A673 (cell line): ENCODE measurements at regions of chr4 and their contacts with region 1.

Region 1: DNA sequence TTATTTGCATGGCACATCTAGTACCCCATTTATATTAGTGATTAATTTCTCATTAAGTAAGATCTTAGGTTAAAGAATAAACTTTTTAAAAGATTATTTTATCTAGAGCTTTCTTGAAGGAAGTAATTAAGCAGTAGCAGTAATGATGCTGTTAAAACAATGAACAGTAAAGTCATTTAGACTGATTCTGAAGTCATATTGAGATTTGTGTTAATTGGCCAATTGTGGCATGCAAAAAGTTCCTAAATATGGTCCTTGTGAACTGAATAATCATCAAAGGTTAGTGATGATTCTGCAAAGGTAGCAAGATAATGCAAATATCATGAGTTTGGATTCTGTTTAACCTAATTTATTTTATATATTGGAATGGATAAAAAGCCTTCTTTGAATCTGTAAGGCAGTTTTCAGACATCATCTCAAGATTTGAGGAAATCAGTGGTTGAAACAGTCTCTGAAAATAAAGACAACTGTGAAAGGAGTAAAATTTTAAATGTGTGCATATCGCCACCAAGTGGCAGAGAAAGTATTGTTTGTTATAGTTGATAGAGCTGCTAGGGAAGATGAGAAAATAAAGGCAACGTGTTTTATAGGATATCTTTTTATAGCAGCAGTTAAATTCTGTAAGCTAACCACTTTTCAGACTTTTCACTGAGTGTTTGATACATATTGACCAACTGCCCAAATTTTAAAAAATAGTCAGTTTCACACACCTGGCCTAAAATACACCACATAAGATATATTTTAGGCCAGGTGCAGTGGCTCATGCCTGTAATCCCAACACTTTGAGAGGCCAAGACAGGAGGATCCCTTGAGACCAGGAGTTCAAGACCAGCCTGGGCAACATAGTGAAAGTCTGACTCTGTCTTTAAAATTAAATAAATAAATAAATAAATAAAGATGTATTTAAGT is 79.6 kb downstream of the CCKAR start:
- DNase-seq: peak; percentile 73
- H3K4me3 ChIP-seq: no peak overlapping the region
- H3K27ac ChIP-seq: no peak overlapping the region
- H3K4me1 ChIP-seq: no peaks in the 10 kb centered on the region
- H3K27me3 ChIP-seq: no peaks in the 10 kb centered on the region
- CTCF ChIP-seq: peak; percentile 72

Region 2: GRCh38 chr4:25439918-25440477 is 970.6 kb before region 1 on chr4:
- CTCF ChIA-PET with region 1: no interaction called
- POLR2A ChIA-PET with region 1: no interaction called
- intact Hi-C with region 1: loop called (anchors 5 kb)
- DNase-seq: peak; percentile 88
- H3K4me3 ChIP-seq: no peak overlapping the region
- H3K27ac ChIP-seq: peak overlapping the region; percentile 32
- H3K4me1 ChIP-seq: peaks cover 14% of the 10 kb centered on the region
- H3K27me3 ChIP-seq: no peaks in the 10 kb centered on the region
- CTCF ChIP-seq: peak; percentile 90

Region 3: GRCh38 chr4:25993395-25994185 is 417.0 kb before region 1 on chr4:
- CTCF ChIA-PET with region 1: no interaction called
- POLR2A ChIA-PET with region 1: no interaction called
- intact Hi-C with region 1: loop called (anchors 2 kb)
- DNase-seq: peak; percentile 54
- H3K4me3 ChIP-seq: no peak overlapping the region
- H3K27ac ChIP-seq: no peak overlapping the region
- H3K4me1 ChIP-seq: no peaks in the 10 kb centered on the region
- H3K27me3 ChIP-seq: no peaks in the 10 kb centered on the region
- CTCF ChIP-seq: peak; percentile 41; the same call in 1 of the 2 replicates

Region 4: DNA sequence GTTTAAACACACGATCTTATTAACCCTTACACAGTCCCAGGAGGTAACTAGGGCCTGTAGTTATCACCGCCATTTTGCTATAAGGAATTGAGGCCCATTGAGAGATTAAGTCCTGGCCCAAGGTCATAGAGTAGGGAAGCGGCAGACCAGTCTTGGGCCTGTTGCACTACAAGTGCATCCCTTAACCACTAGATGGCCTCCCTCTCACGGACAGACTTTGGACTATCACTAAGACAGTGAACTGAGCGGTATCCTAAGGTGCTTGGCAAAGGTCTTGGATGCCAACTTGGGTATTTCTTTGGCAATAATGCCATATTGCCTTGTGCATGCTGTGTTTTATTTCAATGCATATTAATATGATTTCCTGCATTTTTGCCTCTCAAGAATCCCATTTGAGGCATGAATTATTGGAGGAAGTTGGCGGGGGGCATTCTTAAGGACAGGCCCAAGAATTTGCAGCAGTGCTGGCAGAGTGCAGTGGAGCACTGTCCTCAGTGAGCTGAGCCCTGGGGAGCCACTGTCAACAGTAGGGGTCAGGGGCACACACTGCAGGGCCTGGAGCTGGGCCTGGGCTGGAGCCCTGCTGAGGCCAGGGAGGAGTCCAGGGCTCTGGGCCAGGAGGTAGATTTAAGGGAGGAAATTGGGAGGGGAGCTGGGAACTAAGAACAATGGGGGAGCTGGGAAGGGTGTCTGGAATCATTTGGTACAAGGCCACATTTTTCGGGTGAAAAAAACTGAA is 349.2 kb before region 1 on chr4:
- CTCF ChIA-PET with region 1: interaction called, 5 read pairs
- POLR2A ChIA-PET with region 1: no interaction called
- intact Hi-C with region 1: loop called (anchors 2 kb)
- DNase-seq: peak; percentile 64
- H3K4me3 ChIP-seq: no peak overlapping the region
- H3K27ac ChIP-seq: no peak overlapping the region
- H3K4me1 ChIP-seq: no peaks in the 10 kb centered on the region
- H3K27me3 ChIP-seq: no peaks in the 10 kb centered on the region
- CTCF ChIP-seq: peak; percentile 83

Region 5: DNA sequence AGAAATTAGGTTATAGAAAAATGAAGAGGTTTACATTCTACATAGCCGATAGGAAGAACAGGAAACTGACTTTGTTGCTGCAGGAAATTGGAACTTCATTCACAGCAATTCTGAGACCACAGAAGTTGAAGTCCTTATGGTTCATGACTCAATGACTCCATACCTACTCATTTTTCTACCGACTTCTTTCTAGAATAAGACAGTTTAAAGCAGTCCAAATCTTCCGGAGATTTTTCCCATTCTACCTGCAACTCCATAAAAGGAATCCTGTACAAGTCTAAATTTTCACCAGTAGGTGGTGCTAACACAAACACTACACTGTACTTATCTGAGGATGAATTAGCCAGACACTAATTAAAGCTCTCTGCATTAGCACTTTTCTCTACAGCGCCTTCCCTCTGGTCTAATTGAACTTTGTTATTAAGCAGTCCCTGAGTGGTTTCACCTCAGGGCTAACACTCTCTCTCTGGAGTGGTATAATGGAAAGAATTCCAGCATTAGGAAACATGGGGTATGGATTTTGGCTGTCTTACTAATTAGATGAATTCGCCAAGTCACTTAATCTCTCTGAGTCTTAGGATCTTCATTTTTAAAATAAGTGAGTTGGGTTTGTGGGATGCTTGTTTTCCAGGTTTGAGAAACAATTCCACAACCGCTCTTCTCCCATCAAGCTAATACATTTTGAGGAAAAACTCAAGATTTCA is 328.7 kb before region 1 on chr4:
- CTCF ChIA-PET with region 1: no interaction called
- POLR2A ChIA-PET with region 1: no interaction called
- intact Hi-C with region 1: loop called (anchors 5 kb)
- DNase-seq: peak; percentile 59
- H3K4me3 ChIP-seq: no peak overlapping the region
- H3K27ac ChIP-seq: no peak overlapping the region
- H3K4me1 ChIP-seq: no peaks in the 10 kb centered on the region
- H3K27me3 ChIP-seq: peaks cover 44% of the 10 kb centered on the region
- CTCF ChIP-seq: peak; percentile 84

Region 6: DNA sequence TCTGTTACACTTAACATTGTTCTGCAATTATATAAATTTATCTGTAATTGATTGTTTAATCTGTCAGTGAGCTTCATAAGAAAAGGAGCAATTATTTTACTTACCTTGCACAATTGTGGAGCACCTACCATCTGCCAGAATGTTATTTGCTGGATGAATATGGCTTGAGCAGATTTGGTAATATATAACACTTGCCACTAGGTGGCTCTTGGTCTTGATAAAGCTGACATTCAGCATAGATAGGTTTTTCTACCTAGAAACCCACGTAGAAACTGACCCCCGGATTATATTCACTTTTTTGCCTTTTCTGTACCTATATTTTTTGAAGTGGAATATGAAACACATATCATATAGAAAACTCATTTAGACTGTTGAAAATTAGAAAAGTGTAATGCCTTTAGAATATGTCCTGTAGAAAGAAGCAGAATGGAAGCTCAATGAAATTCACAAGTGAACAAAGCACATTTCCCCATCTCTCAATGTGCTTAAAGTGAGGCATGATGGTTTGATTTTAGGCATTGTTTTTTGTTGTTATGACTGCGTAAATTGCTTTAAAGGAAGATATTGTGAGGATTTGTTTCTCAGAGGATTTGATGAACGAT is 80.4 kb before region 1 on chr4:
- CTCF ChIA-PET with region 1: interaction called, 10 read pairs
- POLR2A ChIA-PET with region 1: no interaction called
- intact Hi-C with region 1: loop called (anchors 2 kb)
- DNase-seq: peak; percentile 68
- H3K4me3 ChIP-seq: no peak overlapping the region
- H3K27ac ChIP-seq: no peak overlapping the region
- H3K4me1 ChIP-seq: peaks cover 3% of the 10 kb centered on the region
- H3K27me3 ChIP-seq: no peaks in the 10 kb centered on the region
- CTCF ChIP-seq: peak; percentile 82

Region 7: GRCh38 chr4:26670903-26671537 is 260.4 kb after region 1 on chr4:
- CTCF ChIA-PET with region 1: no interaction called
- POLR2A ChIA-PET with region 1: no interaction called
- intact Hi-C with region 1: no loop called
- DNase-seq: no peak
- H3K4me3 ChIP-seq: no peak overlapping the region
- H3K27ac ChIP-seq: no peak overlapping the region
- H3K4me1 ChIP-seq: no peaks in the 10 kb centered on the region
- H3K27me3 ChIP-seq: no peaks in the 10 kb centered on the region
- CTCF ChIP-seq: no peak